ENCODE measurements at regions of chr21 and their contacts with region 1.

Region 1: GRCh38 chr21:39441502-39442475 is 3.8 kb downstream of the LCA5L start:
- DNase-seq: peak; percentile 46
- ATAC-seq: peak; percentile 47
- H3K4me3 Mint-ChIP-seq: no peak overlapping the region
- H3K27ac Mint-ChIP-seq: no peak overlapping the region
- H3K4me1 Mint-ChIP-seq: peaks cover 9% of the 10 kb centered on the region
- H3K27me3 Mint-ChIP-seq: peaks cover 20% of the 10 kb centered on the region
- CTCF ChIP-seq: peak; percentile 72

Region 2: DNA sequence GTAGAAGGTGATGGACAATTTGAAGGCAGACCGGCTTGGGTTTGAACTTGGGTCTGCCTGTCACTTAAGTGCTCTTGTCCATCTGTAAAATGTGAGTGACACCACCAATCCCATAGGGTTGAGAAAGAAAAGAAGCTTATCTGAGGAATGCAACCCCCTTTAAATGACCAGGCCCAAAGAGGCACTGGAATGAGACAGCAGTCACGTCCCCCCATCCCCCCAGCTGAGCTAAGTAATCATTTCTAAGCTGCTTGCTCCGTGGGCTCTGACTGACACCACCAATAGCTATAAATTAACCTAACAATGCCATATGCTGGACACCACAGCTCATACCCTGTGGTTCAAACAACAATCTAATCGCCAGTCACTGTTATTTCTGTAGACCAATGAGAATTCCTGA is 11.3 kb before region 1 on chr21:
- CTCF ChIA-PET with region 1: interaction called, 31 read pairs
- POLR2A ChIA-PET with region 1: no interaction called
- intact Hi-C with region 1: no loop called
- DNase-seq: no peak
- ATAC-seq: no peak
- H3K4me3 Mint-ChIP-seq: no peak overlapping the region
- H3K27ac Mint-ChIP-seq: no peak overlapping the region
- H3K4me1 Mint-ChIP-seq: no peaks in the 10 kb centered on the region
- H3K27me3 Mint-ChIP-seq: no peaks in the 10 kb centered on the region
- CTCF ChIP-seq: no peak

Region 3: DNA sequence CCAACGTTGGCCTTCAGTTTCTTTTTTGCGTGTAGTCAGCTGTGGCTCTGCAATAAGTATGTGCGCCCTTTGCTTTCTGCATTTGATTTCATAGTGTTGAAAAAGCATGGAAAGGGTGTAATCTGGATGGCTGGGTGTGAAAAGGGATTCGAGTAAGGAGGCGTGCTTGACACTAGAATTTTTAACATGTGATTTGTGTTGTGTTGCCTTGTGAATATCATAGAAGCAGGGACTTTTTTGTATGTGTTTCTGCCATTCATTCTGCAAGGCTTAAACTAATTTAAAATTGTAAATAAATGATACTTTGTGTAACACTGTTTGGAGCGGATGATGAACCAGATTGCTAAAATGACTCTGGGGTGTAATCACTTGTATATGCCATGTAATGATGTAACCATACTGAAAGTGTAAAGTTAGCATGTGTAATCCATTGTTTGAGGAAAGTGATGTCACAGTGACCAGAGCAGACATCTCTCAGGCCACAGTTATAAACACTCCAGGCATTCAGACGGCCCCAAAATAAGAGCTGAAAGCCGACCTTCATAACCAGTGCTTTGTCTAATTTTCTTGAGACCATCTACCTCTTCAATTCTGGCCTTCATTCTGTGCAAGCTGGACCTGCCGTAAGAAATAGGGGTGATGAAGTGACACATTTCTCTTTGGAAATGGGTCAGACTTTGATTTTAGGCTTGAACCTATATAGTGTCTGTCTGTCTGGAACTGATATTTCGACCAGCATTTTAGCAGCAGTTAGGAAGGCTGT is 10.6 kb after region 1 on chr21:
- CTCF ChIA-PET with region 1: interaction called, 15 read pairs
- POLR2A ChIA-PET with region 1: no interaction called
- intact Hi-C with region 1: no loop called
- DNase-seq: no peak
- ATAC-seq: no peak
- H3K4me3 Mint-ChIP-seq: no peak overlapping the region
- H3K27ac Mint-ChIP-seq: no peak overlapping the region
- H3K4me1 Mint-ChIP-seq: no peaks in the 10 kb centered on the region
- H3K27me3 Mint-ChIP-seq: no peaks in the 10 kb centered on the region
- CTCF ChIP-seq: no peak